ENCODE measurements at regions of chr6 and their contacts with region 1.

Region 1: GRCh38 chr6:797479-798077 is 104.6 kb upstream of the EXOC2 start:
- DNase-seq: peak; percentile 80
- H3K4me3 Mint-ChIP-seq: no peak overlapping the region
- H3K27ac Mint-ChIP-seq: no peak overlapping the region
- H3K4me1 Mint-ChIP-seq: no peaks in the 10 kb centered on the region
- H3K27me3 Mint-ChIP-seq: peaks cover 61% of the 10 kb centered on the region

Region 2: DNA sequence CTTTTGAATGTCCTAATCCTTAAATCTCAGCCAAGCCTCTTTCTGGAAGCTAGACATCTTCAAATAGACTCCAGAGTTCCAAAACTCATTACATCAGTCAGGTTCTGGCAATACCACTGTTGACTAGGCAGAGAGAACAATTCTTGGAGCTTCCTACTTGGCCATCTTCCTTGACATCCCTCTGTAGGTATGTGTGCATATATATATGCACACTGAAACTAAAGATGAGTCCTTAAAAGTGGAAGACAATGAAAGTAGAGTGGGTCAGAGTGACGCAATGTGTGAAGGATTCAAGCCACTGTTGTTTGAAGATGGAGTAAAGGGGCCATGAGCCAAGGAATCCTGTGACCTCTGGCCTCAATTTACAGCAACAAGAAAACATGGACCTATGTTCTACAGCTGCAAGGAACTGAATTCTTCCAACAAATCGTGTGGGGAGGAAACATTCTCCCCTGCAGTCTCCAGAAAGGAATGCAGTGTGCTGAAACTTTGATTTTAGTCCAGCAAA is 524.0 kb before region 1 on chr6:
- intact Hi-C with region 1: no loop called
- DNase-seq: peak; percentile 38
- H3K4me3 Mint-ChIP-seq: no peak overlapping the region
- H3K27ac Mint-ChIP-seq: no peak overlapping the region
- H3K4me1 Mint-ChIP-seq: peaks cover 15% of the 10 kb centered on the region
- H3K27me3 Mint-ChIP-seq: peaks cover 11% of the 10 kb centered on the region

Region 3: GRCh38 chr6:453152-453551 is 344.4 kb before region 1 on chr6:
- intact Hi-C with region 1: no loop called
- DNase-seq: no peak
- H3K4me3 Mint-ChIP-seq: no peak overlapping the region
- H3K27ac Mint-ChIP-seq: no peak overlapping the region
- H3K4me1 Mint-ChIP-seq: peaks cover 37% of the 10 kb centered on the region
- H3K27me3 Mint-ChIP-seq: no peaks in the 10 kb centered on the region

Region 4: DNA sequence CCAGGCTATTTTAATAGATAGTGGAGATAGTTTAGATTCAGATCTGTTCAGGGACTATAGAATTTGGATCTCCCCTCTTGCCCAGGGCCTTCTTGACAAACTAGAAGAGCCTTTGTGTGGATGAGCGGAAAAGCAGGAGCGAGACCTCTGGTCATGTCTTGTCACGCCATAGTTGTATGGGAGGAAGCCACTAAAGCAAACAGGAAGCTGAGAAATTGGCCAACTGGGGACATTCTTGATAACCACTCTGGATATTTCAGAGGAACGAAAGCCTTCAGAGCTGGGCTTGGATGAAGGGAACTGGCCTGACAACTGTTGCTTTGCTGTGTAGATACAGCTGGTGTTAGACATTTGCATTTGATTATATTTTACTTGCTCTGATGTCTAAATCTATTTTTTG is 50.5 kb before region 1 on chr6:
- intact Hi-C with region 1: no loop called
- DNase-seq: no peak
- H3K4me3 Mint-ChIP-seq: no peak overlapping the region
- H3K27ac Mint-ChIP-seq: no peak overlapping the region
- H3K4me1 Mint-ChIP-seq: no peaks in the 10 kb centered on the region
- H3K27me3 Mint-ChIP-seq: peaks cover 2% of the 10 kb centered on the region

Region 5: GRCh38 chr6:766625-767024 is 31.0 kb before region 1 on chr6:
- intact Hi-C with region 1: no loop called
- DNase-seq: no peak
- H3K4me3 Mint-ChIP-seq: no peak overlapping the region
- H3K27ac Mint-ChIP-seq: no peak overlapping the region
- H3K4me1 Mint-ChIP-seq: peaks cover 3% of the 10 kb centered on the region
- H3K27me3 Mint-ChIP-seq: peaks cover 38% of the 10 kb centered on the region

Region 6: DNA sequence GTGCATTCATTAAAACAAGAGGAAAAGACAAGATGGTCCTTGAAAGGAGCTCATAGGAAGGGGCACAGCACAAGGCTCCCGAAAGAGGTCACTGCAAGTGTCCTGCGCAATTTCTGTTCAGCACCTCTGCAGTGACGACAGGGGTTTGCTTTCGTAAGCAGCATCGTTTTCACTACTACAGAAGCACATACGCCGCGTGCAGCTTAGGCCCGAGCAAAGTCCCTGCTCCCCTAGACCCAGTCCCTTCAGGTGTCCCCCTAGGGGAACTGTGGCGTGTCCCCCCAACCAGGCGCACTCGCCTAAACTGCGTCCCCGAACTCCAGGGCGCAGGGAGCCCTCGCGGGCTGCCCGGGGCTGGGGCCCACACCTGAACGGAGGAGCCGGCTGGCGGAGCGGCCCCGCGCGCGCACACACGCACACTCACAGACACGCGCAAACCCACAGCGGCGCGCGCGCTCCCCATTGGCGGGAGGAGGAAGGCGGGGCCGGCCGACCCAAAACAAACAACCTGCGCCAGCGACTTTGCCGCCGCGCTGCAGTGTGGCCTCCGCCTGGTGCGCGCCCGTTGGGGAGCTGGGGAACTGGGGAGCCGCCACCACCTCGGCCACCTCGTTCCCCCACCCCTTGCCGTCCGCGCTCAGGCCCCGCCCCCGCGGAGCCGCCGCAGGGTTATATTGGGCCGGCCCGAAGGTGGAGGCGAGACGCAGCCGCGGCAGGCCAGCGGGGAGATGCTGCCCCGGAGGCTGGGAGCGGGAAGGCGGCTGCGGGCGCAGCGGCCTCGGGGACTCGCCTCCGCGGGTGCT is 514.0 kb after region 1 on chr6 and contains the start of gene FOXQ1:
- intact Hi-C with region 1: loop called (anchors 10 kb)
- DNase-seq: peak; percentile 64
- H3K4me3 Mint-ChIP-seq: peak within 1 kb of the TSS; percentile 62
- H3K27ac Mint-ChIP-seq: peak within 1 kb of the TSS; percentile 82
- H3K4me1 Mint-ChIP-seq: peaks cover 14% of the 10 kb centered on the region
- H3K27me3 Mint-ChIP-seq: peaks cover 73% of the 10 kb centered on the region
- total RNA-seq, gene FOXQ1: not detected in 2 replicates

Region 7: GRCh38 chr6:1396952-1397868 is 599.6 kb after region 1 on chr6:
- intact Hi-C with region 1: loop called (anchors 1 kb)
- DNase-seq: peak; percentile 91
- H3K4me3 Mint-ChIP-seq: no peak overlapping the region
- H3K27ac Mint-ChIP-seq: no peak overlapping the region
- H3K4me1 Mint-ChIP-seq: peaks cover 5% of the 10 kb centered on the region
- H3K27me3 Mint-ChIP-seq: peaks cover 54% of the 10 kb centered on the region

Region 8: DNA sequence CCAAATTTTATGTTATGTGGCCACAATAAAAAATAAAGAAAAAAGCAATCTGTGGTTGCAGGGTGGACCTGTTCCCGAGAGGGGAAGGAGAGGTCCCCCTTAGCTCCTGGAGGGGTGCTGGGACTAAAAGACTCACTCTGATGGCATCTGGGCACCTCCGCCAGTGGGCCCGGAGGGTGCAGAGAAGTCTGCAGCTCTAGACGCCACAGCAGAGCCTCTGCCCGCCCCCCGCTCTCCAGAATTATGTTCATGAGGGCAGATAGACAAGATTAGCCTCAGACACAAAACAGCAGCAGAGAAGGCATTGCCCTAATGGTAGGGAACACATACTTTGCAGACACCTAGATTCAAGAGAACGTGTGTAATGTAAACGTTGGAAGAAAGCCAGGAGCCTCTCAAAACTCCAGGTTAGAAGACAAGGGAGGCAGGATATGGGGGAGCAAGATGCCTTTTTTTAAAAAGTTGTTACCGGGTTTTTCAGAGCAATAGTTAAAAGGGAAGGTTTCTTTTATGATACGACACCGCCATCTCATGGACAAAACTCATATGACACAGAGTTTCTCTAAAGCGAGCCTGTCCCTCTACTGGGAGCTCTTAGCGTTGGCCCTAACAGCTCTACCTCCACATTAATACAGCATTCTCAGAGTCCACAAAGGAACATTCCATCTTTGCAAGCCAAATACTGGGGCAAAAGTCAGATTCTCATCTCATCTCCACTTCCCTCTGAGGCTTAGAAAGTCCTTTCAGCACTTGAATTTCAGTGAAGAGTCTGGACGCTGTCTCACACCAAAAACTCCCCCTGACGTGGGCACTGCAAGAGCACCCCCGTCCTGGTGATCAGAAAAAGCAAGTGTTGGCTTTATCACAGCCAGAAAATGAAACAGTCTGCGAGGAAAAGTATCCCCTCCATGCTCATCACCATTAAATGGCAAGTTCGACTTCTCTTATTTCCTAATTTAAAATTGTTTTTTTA is 639.0 kb after region 1 on chr6:
- intact Hi-C with region 1: loop called (anchors 5 kb)
- DNase-seq: peak; percentile 89
- H3K4me3 Mint-ChIP-seq: no peak overlapping the region
- H3K27ac Mint-ChIP-seq: no peak overlapping the region
- H3K4me1 Mint-ChIP-seq: no peaks in the 10 kb centered on the region
- H3K27me3 Mint-ChIP-seq: peaks cover 23% of the 10 kb centered on the region